Activated CD8-positive, alpha-beta memory T cell treated with anti-CD3 and anti-CD28 coated beads, Interleukin-2, amount 10 ng/mL, durations not matched to agents 7 days and 5 days (primary cell): ENCODE measurements at regions of chr7 and their contacts with region 1.

Region 1: GRCh38 chr7:135170274-135170997 is at the start of gene CYREN:
- DNase-seq: peak; percentile 94
- ATAC-seq: peak; percentile 85
- H3K4me3 Mint-ChIP-seq: peak within 1 kb of the TSS; percentile 90
- H3K27ac Mint-ChIP-seq: peak within 1 kb of the TSS; percentile 92
- H3K4me1 Mint-ChIP-seq: peaks cover 43% of the 10 kb centered on the region
- H3K27me3 Mint-ChIP-seq: no peaks in the 10 kb centered on the region
- total RNA-seq, gene CYREN: 33.2 to 46.0 TPM

Region 2: GRCh38 chr7:134966681-134967080 is 203.8 kb before region 1 on chr7:
- CTCF ChIA-PET with region 1: no interaction called
- DNase-seq: no peak
- ATAC-seq: no peak
- H3K4me3 Mint-ChIP-seq: no peak overlapping the region
- H3K27ac Mint-ChIP-seq: no peak overlapping the region
- H3K4me1 Mint-ChIP-seq: no peaks in the 10 kb centered on the region
- H3K27me3 Mint-ChIP-seq: peaks cover 27% of the 10 kb centered on the region

Region 3: DNA sequence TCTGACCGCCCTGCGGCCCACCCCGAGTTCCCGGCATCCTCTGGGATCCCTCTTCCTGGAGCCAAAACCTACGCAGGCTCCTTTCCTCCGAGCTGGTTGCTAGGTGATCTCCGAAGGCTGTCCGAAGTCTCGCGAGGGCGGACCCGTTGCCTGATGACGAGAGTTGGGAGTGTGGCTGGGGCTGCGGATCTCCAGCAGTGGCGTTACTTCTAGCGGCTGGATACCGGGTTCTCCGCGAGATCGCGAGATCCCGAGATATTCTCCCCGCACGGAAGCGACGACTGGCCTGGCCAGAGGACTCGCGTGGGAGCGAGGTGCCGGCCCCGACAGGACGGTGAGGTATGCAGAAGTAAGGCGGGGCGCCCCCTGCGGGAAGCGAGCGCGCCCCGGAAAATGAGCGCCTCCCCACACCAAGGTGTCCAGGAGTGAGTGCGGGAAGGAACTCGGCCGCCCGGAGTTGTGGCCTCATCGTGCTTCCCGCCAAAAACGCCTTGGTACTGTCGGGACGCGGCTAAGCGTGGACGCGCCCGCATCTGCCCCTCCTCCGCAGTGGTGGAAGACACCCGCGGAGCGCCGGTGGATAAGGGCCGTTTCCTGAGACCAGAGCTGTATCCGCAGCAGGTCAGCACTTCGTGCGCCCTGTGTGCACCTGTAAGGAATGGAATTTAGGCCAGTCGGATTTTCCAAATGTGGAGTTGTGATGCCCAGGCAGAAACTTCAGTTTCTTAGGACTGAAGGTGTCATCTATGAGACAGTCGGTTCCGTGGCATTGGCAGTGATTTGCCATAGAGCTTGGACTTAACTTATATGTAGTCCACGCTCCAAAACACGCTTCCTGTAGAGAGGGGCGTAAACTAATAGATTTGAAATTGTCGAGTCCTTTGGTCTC is 183.8 kb before region 1 on chr7 and contains the start of gene AGBL3:
- CTCF ChIA-PET with region 1: interaction called, 65 read pairs
- DNase-seq: peak; percentile 96
- ATAC-seq: peak; percentile 96
- H3K4me3 Mint-ChIP-seq: peak within 1 kb of the TSS; percentile 97
- H3K27ac Mint-ChIP-seq: peak within 1 kb of the TSS; percentile 93
- H3K4me1 Mint-ChIP-seq: peaks cover 34% of the 10 kb centered on the region
- H3K27me3 Mint-ChIP-seq: no peaks in the 10 kb centered on the region
- total RNA-seq, gene AGBL3: 2.4 to 2.8 TPM

Region 4: DNA sequence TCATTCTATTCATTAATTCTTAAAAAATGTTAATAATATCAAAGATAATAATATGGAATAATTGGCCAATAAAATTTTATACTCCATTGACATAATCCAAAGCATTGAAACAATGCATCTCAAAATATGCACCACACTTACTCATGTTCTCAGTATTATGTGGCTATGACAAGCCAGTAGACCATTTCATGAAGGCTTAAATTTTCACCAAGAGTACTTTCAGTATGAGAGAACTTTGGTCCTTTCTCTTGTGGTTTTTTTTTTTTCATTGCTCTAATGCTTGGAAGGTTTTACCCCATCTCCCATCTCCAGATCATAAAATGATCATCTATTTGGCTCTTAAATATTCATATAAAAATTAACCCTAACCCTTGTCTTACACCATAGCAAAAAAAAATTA is 68.1 kb before region 1 on chr7:
- CTCF ChIA-PET with region 1: no interaction called
- DNase-seq: no peak
- ATAC-seq: no peak
- H3K4me3 Mint-ChIP-seq: no peak overlapping the region
- H3K27ac Mint-ChIP-seq: no peak overlapping the region
- H3K4me1 Mint-ChIP-seq: peaks cover 4% of the 10 kb centered on the region
- H3K27me3 Mint-ChIP-seq: no peaks in the 10 kb centered on the region

Region 5: GRCh38 chr7:135160098-135160857 is 10.2 kb before region 1 on chr7:
- CTCF ChIA-PET with region 1: interaction called, 32 read pairs
- DNase-seq: no peak
- ATAC-seq: peak; percentile 60
- H3K4me3 Mint-ChIP-seq: peak overlapping the region; percentile 33
- H3K27ac Mint-ChIP-seq: peak overlapping the region; percentile 88
- H3K4me1 Mint-ChIP-seq: peaks cover 31% of the 10 kb centered on the region
- H3K27me3 Mint-ChIP-seq: no peaks in the 10 kb centered on the region